ENCODE measurements at regions of chr1 and their contacts with region 1.

Region 1: DNA sequence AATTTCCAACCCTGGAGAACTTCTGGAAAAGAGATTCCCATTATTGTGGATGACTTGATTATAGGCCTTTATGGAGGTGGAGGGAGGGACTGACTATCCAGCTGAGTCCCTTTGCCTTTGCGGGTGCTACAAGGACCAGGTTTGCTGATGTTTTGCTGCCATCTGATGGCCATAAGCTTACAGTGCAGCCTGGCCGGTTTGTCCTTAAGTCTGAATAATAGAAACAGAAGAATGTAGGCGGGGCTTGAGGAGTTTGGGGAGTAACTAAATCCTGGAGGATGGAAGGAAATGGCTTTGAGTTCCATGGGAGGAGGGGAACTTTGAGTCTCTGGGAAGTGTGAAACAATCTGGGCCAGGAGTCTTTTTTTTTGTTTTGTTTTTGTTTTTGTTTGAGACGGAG is 55.7 kb upstream of the CD1D start:
- DNase-seq: peak; percentile 71 to 74
- H3K4me3 ChIP-seq: no peak overlapping the region
- H3K27ac ChIP-seq: no peak overlapping the region
- H3K4me1 ChIP-seq: no peaks in the 10 kb centered on the region
- H3K27me3 ChIP-seq: peaks cover 18% of the 10 kb centered on the region
- CTCF ChIP-seq: peak; percentile 97

Region 2: GRCh38 chr1:157369808-157370521 is 755.0 kb before region 1 on chr1:
- CTCF ChIA-PET with region 1: no interaction called
- POLR2A ChIA-PET with region 1: interaction called, 4 read pairs
- intact Hi-C with region 1: loop called (anchors 10 kb)
- DNase-seq: peak; percentile 20 to 46
- H3K4me3 ChIP-seq: no peak overlapping the region
- H3K27ac ChIP-seq: no peak overlapping the region
- H3K4me1 ChIP-seq: no peaks in the 10 kb centered on the region
- H3K27me3 ChIP-seq: peaks cover 9% of the 10 kb centered on the region
- CTCF ChIP-seq: peak; percentile 93

Region 3: GRCh38 chr1:157580179-157580827 is 544.7 kb before region 1 on chr1:
- CTCF ChIA-PET with region 1: interaction called, 5 read pairs
- POLR2A ChIA-PET with region 1: no interaction called
- intact Hi-C with region 1: loop called (anchors 5 kb)
- DNase-seq: peak; percentile 3 to 54
- H3K4me3 ChIP-seq: no peak overlapping the region
- H3K27ac ChIP-seq: no peak overlapping the region
- H3K4me1 ChIP-seq: no peaks in the 10 kb centered on the region
- H3K27me3 ChIP-seq: 0 out of 2 replicates have a peak, but pooled peaks cover 11% of the 10 kb centered on the region
- CTCF ChIP-seq: peak; percentile 84

Region 4: GRCh38 chr1:157963713-157964112 is 161.3 kb before region 1 on chr1:
- CTCF ChIA-PET with region 1: interaction called, 26 read pairs
- POLR2A ChIA-PET with region 1: no interaction called
- intact Hi-C with region 1: loop called (anchors 1 kb)
- DNase-seq: peak in 1 of 2 experiments; percentile 69
- H3K4me3 ChIP-seq: no peak overlapping the region
- H3K27ac ChIP-seq: no peak overlapping the region
- H3K4me1 ChIP-seq: no peaks in the 10 kb centered on the region
- H3K27me3 ChIP-seq: peaks cover 31% of the 10 kb centered on the region
- CTCF ChIP-seq: peak; percentile 93

Region 5: GRCh38 chr1:157992031-157992832 is 132.8 kb before region 1 on chr1:
- CTCF ChIA-PET with region 1: interaction called, 25 read pairs
- POLR2A ChIA-PET with region 1: no interaction called
- intact Hi-C with region 1: loop called (anchors 1 kb)
- DNase-seq: peak in 1 of 2 experiments; percentile 67
- H3K4me3 ChIP-seq: no peak overlapping the region
- H3K27ac ChIP-seq: no peak overlapping the region
- H3K4me1 ChIP-seq: no peaks in the 10 kb centered on the region
- H3K27me3 ChIP-seq: peaks cover 32% of the 10 kb centered on the region
- CTCF ChIP-seq: peak; percentile 94

Region 6: GRCh38 chr1:158028969-158029368 is 96.0 kb before region 1 on chr1:
- CTCF ChIA-PET with region 1: no interaction called
- POLR2A ChIA-PET with region 1: no interaction called
- intact Hi-C with region 1: no loop called
- DNase-seq: peak; percentile 25 to 84
- H3K4me3 ChIP-seq: no peak overlapping the region
- H3K27ac ChIP-seq: no peak overlapping the region
- H3K4me1 ChIP-seq: peaks cover 36% of the 10 kb centered on the region
- H3K27me3 ChIP-seq: no peaks in the 10 kb centered on the region
- CTCF ChIP-seq: no peak

Measured in PC-9 (cell line).